ENCODE measurements at regions of chr12 and their contacts with region 1.

Region 1: DNA sequence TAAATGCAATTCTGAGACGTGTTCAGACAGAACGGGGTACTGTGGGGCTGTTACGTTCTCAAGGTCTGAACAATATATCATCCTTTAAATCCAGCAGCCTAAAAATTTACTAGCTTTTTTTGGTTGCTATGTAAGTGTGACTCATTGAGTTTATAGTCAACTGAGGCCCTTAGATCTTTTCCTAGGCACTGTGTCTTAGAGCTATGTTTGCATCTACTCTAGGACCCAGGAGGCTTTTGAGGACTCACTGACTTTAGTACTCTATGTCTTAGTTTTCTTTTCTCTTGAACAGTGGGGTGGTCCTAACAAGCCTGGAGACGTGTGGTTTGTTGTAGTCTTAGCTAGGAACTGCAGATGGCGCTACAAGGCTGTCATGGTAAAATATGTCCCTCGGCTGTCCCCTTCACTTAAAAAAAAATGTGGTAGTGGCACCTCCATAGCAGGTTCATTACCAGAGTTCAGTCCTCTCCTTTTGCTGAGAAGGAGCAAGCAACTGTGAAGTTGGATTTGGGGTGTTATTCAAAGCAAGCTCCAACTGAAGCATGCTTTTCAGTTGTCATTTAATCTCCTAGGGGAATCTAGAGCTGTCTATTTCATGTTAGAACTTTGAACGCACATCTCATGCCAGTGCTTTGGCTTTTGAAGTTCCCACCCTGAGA is 8.7 kb upstream of the SPATS2 start:
- DNase-seq: peak; percentile 75
- ATAC-seq: peak; percentile 96
- H3K4me3 Mint-ChIP-seq: no peak overlapping the region
- H3K27ac Mint-ChIP-seq: no peak overlapping the region
- H3K4me1 Mint-ChIP-seq: peaks cover 6% of the 10 kb centered on the region
- H3K27me3 Mint-ChIP-seq: peaks cover 49% of the 10 kb centered on the region

Region 2: DNA sequence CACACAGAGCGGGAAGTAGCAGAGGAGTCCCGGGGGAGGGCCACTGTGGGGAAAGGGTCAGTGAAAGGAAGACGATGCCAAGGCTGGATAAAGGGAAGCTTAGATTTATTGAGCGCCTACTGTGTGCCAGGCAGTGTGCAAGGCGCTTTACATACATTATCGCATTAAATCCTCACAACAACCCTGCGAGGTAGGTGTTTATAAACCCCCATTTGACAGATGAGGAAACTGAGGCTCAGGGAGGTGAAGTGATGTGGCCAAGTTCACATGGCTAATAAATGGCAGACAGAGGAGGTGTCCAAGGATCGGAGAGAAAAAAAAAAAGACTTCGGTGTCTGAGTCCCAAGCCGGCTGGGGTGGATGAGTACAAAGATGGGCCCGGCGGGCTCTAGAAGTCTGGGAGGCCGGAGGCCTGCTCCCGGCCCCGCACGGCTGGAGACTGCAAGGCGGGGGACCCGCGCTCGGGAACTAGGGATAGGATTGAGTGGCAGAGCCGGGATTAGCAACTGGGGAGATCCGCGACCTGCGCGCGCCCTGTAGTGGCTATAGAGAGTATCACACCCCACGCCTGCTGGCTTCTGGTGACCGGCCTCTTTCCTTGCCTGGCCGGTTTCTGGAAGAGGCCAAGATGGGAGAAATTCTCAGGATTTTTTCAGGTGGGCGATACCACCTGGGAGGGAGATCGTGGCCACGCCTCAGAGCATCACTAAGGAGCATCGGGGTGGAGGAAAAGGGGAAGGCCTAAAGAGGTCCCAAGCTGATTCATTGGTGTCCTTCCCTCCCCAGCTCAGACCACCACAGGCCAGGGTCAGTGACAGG is 363.3 kb before region 1 on chr12:
- CTCF ChIA-PET with region 1: no interaction called
- DNase-seq: peak; percentile 65
- ATAC-seq: peak; percentile 44
- H3K4me3 Mint-ChIP-seq: no peak overlapping the region
- H3K27ac Mint-ChIP-seq: no peak overlapping the region
- H3K4me1 Mint-ChIP-seq: peaks cover 33% of the 10 kb centered on the region
- H3K27me3 Mint-ChIP-seq: peaks cover 60% of the 10 kb centered on the region

Region 3: DNA sequence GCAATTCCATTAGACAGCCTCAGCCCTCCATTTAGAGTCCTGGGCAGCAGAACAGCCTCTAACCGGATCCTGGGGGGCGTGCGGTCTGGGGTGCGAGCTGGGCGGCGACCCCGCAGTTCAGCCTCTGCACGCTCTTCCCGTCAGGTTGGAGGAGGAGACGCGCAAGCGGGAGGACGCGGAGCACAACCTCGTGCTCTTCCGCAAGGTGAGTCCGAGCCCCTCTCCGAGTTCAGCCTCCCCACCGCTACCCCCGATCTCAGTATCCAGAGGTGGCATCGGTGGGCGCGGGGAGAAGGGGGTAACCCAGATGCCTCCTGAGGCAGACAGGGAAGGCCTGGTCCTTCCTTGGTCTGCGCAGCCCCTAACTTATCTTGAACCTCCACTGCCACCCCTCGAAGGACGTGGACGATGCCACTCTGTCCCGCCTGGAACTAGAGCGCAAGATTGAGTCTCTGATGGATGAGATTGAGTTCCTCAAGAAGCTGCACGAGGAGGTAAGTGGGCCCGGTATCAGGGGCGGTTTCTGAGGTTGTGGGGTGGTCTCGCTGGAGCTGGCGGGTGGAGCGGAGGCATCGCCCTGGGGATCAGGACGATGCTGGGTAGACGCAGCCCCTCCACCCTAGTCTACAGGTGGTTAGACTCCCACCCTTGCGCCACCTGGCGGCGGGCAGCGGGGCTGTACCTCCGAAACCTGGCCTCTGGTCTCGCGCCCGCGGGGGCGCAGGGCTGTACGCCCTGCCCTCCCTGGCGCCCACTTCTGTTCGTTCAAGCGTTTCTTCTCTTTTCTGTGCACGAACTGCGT is 62.4 kb before region 1 on chr12:
- CTCF ChIA-PET with region 1: interaction called, 35 read pairs
- DNase-seq: peak; percentile 77
- ATAC-seq: peak; percentile 71
- H3K4me3 Mint-ChIP-seq: peak overlapping the region; percentile 67
- H3K27ac Mint-ChIP-seq: no peak overlapping the region
- H3K4me1 Mint-ChIP-seq: peaks cover 20% of the 10 kb centered on the region
- H3K27me3 Mint-ChIP-seq: peaks cover 63% of the 10 kb centered on the region

Region 4: GRCh38 chr12:49331380-49332222 is 27.0 kb before region 1 on chr12:
- CTCF ChIA-PET with region 1: interaction called, 12 read pairs
- DNase-seq: no peak
- ATAC-seq: no peak
- H3K4me3 Mint-ChIP-seq: no peak overlapping the region
- H3K27ac Mint-ChIP-seq: no peak overlapping the region
- H3K4me1 Mint-ChIP-seq: peaks cover 7% of the 10 kb centered on the region
- H3K27me3 Mint-ChIP-seq: peaks cover 32% of the 10 kb centered on the region

Region 5: DNA sequence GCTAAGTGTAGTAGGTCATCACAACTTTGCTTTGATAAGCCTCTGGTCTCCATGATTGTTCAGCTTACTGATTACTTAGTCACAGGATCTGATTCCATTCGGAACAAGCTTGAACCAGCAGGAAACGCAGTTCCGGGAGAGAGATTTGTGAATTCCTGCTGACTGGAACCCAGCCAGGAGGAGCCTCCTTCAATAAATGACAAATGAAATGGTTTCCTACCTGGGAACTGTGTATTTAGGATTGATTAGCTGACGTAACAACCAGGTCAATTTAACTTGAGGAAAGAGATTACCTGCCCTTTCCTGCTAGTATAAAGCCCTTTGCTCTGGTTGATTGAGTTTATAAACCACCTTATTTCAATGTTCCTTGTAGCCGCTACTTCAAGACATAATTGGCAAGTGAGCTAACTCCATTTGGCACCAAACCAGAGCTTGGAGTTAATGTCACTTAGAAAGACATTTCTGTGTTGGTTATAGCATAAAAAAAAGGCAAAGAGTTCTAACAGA is 145.1 kb after region 1 on chr12:
- CTCF ChIA-PET with region 1: interaction called, 260 read pairs
- DNase-seq: no peak
- ATAC-seq: no peak
- H3K4me3 Mint-ChIP-seq: no peak overlapping the region
- H3K27ac Mint-ChIP-seq: no peak overlapping the region
- H3K4me1 Mint-ChIP-seq: peaks cover 2% of the 10 kb centered on the region
- H3K27me3 Mint-ChIP-seq: no peaks in the 10 kb centered on the region

Region 6: GRCh38 chr12:49553512-49554088 is 195.0 kb after region 1 on chr12:
- CTCF ChIA-PET with region 1: interaction called, 15 read pairs
- DNase-seq: no peak
- ATAC-seq: peak; percentile 74
- H3K4me3 Mint-ChIP-seq: no peak overlapping the region
- H3K27ac Mint-ChIP-seq: no peak overlapping the region
- H3K4me1 Mint-ChIP-seq: peaks cover 3% of the 10 kb centered on the region
- H3K27me3 Mint-ChIP-seq: peaks cover 17% of the 10 kb centered on the region